GM13977 (cell line): ENCODE measurements at regions of chr12 and their contacts with region 1.

Region 1: DNA sequence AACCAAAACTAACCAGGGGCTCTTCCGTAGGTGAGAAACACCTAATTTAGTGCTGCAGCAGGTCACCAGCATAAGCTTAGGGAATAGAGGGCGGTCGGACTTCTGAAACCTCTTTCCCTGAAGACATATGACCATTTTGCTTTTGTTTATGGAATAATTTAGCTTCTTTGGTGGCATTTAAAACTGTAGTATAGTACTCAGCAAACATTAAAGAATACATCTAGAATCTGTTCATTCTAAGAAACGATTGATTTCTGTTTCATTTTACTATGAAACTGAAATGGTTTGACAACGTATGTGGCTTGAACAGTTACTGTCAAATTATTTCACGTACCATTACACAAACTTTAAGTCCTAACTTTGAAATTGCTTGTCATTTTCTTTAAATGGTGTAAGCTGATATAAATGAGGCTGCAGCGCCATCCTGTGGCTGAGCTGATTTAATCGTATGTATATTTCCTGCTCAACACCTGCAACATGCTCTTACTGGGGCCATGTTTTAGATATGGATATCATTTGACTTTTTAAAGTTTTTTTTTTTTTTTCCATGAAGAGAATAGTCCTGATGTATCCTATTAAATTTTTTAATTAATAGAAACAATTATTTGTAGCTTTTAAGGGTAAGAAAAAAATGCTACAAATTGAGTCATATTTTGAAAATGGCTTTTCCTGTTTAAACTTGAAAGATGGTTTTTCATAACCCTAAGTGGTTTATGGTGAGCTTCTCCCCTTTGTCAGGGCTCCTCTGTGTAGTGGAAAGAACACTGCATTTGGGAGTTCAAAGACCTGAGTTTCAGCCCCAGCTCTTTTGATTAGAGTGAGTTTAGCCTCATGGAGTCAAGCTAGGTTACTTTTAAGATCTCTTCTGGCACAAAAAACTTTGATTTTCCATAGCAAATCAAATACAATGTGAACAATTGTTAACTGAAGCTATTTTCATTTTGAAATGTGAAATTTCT is 27.4 kb downstream of the CFAP54 start:
- DNase-seq: peak; percentile 54
- CTCF ChIP-seq: peak; percentile 78

Region 2: GRCh38 chr12:96061864-96062453 is 454.8 kb before region 1 on chr12:
- in situ Hi-C with region 1: loop called (anchors 10 kb)
- DNase-seq: peak; percentile 73
- CTCF ChIP-seq: peak; percentile 73

Region 3: GRCh38 chr12:96985480-96986362 is 469.0 kb after region 1 on chr12:
- in situ Hi-C with region 1: no loop called
- DNase-seq: peak; percentile 76
- CTCF ChIP-seq: peak; percentile 96